Prostate gland (tissue), 2 donors: ENCODE measurements at regions of chr7 and their contacts with region 1.

Region 1: GRCh38 chr7:85554236-85555178 is 367.7 kb upstream of the SEMA3D start:
- DNase-seq: peak; percentile 9
- H3K4me3 ChIP-seq: no peak overlapping the region
- H3K27ac ChIP-seq: no peak overlapping the region
- H3K4me1 ChIP-seq: no peaks in the 10 kb centered on the region
- H3K27me3 ChIP-seq: no peaks in the 10 kb centered on the region
- CTCF ChIP-seq: peak; percentile 34 to 74 (median 62)
- POLR2A ChIP-seq: no peak

Region 2: GRCh38 chr7:85041605-85042216 is 512.8 kb before region 1 on chr7:
- intact Hi-C with region 1: loop called (anchors 5 kb)
- DNase-seq: peak; percentile 63
- H3K4me3 ChIP-seq: no peak overlapping the region
- H3K27ac ChIP-seq: no peak overlapping the region
- H3K4me1 ChIP-seq: no peaks in the 10 kb centered on the region
- H3K27me3 ChIP-seq: no peaks in the 10 kb centered on the region
- CTCF ChIP-seq: peak; percentile 12 to 73 (median 71)
- POLR2A ChIP-seq: no peak

Region 3: GRCh38 chr7:85068799-85069198 is 485.7 kb before region 1 on chr7:
- intact Hi-C with region 1: no loop called
- DNase-seq: no peak
- H3K4me3 ChIP-seq: no peak overlapping the region
- H3K27ac ChIP-seq: no peak overlapping the region
- H3K4me1 ChIP-seq: no peaks in the 10 kb centered on the region
- H3K27me3 ChIP-seq: no peaks in the 10 kb centered on the region
- CTCF ChIP-seq: no peak
- POLR2A ChIP-seq: no peak

Region 4: DNA sequence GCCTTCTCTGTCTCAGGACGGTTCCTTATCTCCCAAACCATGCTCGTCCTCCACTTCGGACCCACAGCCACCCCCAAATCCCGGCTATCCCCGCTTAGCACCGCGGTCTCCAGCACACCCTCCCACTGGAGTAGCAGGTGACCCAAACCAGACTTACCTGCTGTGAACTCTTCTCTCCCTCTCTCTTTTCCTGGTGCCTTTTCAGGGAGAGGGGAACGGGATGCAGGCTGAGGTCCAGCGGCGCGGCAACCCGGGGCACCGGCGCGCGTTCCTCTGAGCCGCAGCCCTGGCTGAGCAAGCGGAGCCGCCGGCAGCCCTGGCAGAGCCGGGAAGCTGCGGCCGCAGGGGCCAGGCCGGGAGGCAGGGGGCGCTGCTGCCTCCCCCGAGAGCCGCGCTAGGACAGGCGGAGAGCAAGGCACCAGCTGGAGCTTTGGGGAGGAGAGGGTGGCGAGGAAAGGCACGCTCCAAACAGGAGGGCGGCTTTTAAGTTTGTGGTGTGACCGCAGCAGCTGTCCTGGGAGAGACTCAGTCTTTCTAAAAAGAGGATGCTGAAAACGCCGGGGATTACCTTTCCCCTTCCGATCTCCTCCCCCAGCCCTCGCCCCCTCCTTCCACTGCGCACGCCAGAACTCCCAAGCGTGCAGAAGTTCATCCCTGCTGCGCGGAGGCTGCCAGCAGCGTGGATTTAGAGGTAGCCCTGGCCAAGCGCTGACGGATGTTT is 367.8 kb before region 1 on chr7 and contains the start of gene SEMA3D:
- intact Hi-C with region 1: loop called (anchors 5 kb)
- DNase-seq: peak; percentile 66
- H3K4me3 ChIP-seq: peak within 1 kb of the TSS; percentile 43
- H3K27ac ChIP-seq: peak within 1 kb of the TSS; percentile 64 to 68
- H3K4me1 ChIP-seq: no peaks in the 10 kb centered on the region
- H3K27me3 ChIP-seq: no peaks in the 10 kb centered on the region
- CTCF ChIP-seq: peak; percentile 58 to 86 (median 79)
- POLR2A ChIP-seq: no peak
- total RNA-seq, gene SEMA3D: 10.7 to 16.5 TPM

Region 5: DNA sequence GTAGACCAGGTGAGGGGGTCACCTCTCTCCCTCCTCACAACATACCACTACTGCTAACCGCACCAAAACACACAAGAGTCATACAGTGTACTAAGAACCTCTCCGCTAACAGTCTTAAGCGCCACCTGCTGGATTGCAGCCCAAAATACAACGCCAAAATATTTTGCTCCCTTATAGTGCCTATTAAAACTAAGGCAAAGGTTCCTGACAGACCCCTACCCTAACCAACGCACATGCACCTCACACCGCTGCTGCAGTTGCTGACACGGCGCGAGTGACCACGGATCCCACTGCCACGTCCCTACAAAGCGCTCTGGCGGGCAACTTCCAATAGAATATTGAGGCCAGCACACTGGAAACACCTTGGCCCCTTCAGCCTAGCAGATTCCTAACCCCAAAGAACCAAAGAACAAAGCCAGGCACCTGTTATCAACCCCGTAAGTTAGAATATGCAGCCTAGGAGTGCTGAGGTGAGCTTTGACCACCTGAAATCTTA is 196.0 kb after region 1 on chr7:
- intact Hi-C with region 1: no loop called
- DNase-seq: no peak
- H3K4me3 ChIP-seq: no peak overlapping the region
- H3K27ac ChIP-seq: no peak overlapping the region
- H3K4me1 ChIP-seq: no peaks in the 10 kb centered on the region
- H3K27me3 ChIP-seq: no peaks in the 10 kb centered on the region
- CTCF ChIP-seq: peak in 1 of 4 experiments; percentile 21
- POLR2A ChIP-seq: no peak